HAP-1 (cell line): ENCODE measurements at regions of chr9 and their contacts with region 1.

Region 1: GRCh38 chr9:12464910-12465512 is 228.2 kb upstream of the TYRP1 start:
- DNase-seq: peak; percentile 51 to 66
- H3K4me3 ChIP-seq: no peak overlapping the region
- H3K4me1 ChIP-seq: peaks cover 28% of the 10 kb centered on the region
- H3K27me3 ChIP-seq: no peaks in the 10 kb centered on the region

Region 2: GRCh38 chr9:12640016-12640587 is 175.1 kb after region 1 on chr9:
- in situ Hi-C with region 1: loop called (anchors 25 kb)
- DNase-seq: peak; percentile 23 to 88
- H3K4me3 ChIP-seq: no peak overlapping the region
- H3K4me1 ChIP-seq: peaks cover 7% of the 10 kb centered on the region
- H3K27me3 ChIP-seq: no peaks in the 10 kb centered on the region